Endothelial cell of umbilical vein (primary cell): ENCODE measurements at regions of chr12 and their contacts with region 1.

Region 1: DNA sequence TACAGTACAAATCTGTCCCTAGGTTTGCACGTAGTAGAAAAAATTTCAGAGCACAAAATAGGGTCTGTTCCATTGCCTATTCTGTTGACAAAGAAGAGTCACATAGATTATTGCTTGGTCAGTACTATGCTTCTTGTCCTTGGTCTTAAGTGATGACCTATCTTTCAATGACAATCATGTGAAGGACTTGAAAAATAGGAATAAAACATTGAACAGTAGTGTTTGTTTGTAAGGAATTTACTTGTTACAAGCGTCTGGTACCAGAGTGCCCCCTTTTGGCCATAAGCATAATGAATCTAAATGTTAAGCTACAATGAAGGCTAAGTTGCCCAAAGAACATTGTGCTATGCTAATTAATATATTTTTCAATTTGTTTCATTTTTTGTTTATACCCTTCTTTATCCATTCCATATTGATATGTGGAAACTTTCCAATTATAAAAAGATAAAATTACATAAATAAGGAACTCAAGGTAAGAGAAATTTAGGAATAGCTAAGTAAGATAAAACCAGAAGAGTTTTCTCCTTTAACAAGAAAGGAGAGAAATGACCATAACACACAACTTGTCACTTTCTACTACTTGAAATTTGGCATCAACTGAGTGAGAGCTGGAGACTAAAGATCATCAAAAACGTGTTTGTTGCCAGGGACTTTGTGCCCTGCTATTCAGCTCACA is 204.7 kb downstream of the EPS8 start:
- DNase-seq: peak; percentile 52
- H3K4me3 ChIP-seq: no peak overlapping the region
- H3K27ac ChIP-seq: no peak overlapping the region
- H3K4me1 ChIP-seq: no peaks in the 10 kb centered on the region
- H3K27me3 ChIP-seq: peaks cover 5 to 11% of the 10 kb centered on the region in 2 experiments
- CTCF ChIP-seq: peak; percentile 48 to 60
- POLR2A ChIP-seq: no peak

Region 2: GRCh38 chr12:15227004-15227679 is 357.4 kb before region 1 on chr12:
- CTCF ChIA-PET with region 1: interaction called, 17 read pairs
- POLR2A ChIA-PET with region 1: no interaction called
- dilution Hi-C with region 1: no loop called
- intact Hi-C with region 1: no loop called
- DNase-seq: peak; percentile 55
- H3K4me3 ChIP-seq: no peak overlapping the region
- H3K27ac ChIP-seq: no peak overlapping the region
- H3K4me1 ChIP-seq: no peaks in the 10 kb centered on the region
- H3K27me3 ChIP-seq: peaks cover 7 to 23% of the 10 kb centered on the region in 2 experiments
- CTCF ChIP-seq: peak; percentile 56 to 67
- POLR2A ChIP-seq: no peak

Region 3: GRCh38 chr12:15532364-15532977 is 52.0 kb before region 1 on chr12:
- CTCF ChIA-PET with region 1: interaction called, 202 read pairs
- POLR2A ChIA-PET with region 1: no interaction called
- dilution Hi-C with region 1: no loop called
- intact Hi-C with region 1: loop called (anchors 1 kb)
- DNase-seq: peak; percentile 41
- H3K4me3 ChIP-seq: no peak overlapping the region
- H3K27ac ChIP-seq: no peak overlapping the region
- H3K4me1 ChIP-seq: no peaks in the 10 kb centered on the region
- H3K27me3 ChIP-seq: peaks cover 0 to 3% of the 10 kb centered on the region in 2 experiments
- CTCF ChIP-seq: peak; percentile 25 to 45
- POLR2A ChIP-seq: no peak

Region 4: GRCh38 chr12:15563663-15564062 is 20.8 kb before region 1 on chr12:
- CTCF ChIA-PET with region 1: interaction called, 40 read pairs
- POLR2A ChIA-PET with region 1: no interaction called
- dilution Hi-C with region 1: no loop called
- intact Hi-C with region 1: no loop called
- DNase-seq: peak; percentile 49
- H3K4me3 ChIP-seq: no peak overlapping the region
- H3K27ac ChIP-seq: no peak overlapping the region
- H3K4me1 ChIP-seq: no peaks in the 10 kb centered on the region
- H3K27me3 ChIP-seq: peaks cover 0 to 9% of the 10 kb centered on the region in 2 experiments
- CTCF ChIP-seq: no peak
- POLR2A ChIP-seq: no peak

Region 5: DNA sequence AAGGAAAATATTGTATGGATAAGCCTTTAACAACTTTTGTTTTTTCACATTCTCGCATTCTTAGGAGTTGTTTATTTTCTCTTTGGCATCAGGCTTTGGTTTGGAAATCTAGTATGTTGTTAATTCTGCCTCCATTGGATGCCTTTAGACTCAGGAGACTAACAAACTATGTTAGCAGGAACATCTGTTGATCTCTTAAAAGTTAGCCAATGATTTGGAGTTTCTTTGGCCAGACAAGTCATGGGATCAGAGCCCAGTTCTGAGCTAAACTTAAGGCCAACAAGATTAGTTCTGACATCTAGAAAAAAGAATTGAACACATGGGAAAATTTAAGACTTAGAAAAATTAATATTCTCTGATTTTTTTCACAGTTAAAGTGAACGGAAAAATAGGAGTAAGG is 262.4 kb after region 1 on chr12:
- CTCF ChIA-PET with region 1: interaction called, 21 read pairs
- POLR2A ChIA-PET with region 1: no interaction called
- dilution Hi-C with region 1: no loop called
- intact Hi-C with region 1: no loop called
- DNase-seq: no peak
- H3K4me3 ChIP-seq: no peak overlapping the region
- H3K27ac ChIP-seq: no peak overlapping the region
- H3K4me1 ChIP-seq: no peaks in the 10 kb centered on the region
- H3K27me3 ChIP-seq: no peaks in the 10 kb centered on the region
- CTCF ChIP-seq: no peak
- POLR2A ChIP-seq: no peak